AG04450 (cell line): ENCODE measurements at regions of chr14 and their contacts with region 1.

Region 1: GRCh38 chr14:75487155-75487671 is 35.1 kb upstream of the BATF start:
- DNase-seq: no peak
- H3K4me3 ChIP-seq: no peak overlapping the region
- H3K27ac ChIP-seq: no peak overlapping the region
- H3K27me3 ChIP-seq: peaks cover 14% of the 10 kb centered on the region
- CTCF ChIP-seq: no peak

Region 2: DNA sequence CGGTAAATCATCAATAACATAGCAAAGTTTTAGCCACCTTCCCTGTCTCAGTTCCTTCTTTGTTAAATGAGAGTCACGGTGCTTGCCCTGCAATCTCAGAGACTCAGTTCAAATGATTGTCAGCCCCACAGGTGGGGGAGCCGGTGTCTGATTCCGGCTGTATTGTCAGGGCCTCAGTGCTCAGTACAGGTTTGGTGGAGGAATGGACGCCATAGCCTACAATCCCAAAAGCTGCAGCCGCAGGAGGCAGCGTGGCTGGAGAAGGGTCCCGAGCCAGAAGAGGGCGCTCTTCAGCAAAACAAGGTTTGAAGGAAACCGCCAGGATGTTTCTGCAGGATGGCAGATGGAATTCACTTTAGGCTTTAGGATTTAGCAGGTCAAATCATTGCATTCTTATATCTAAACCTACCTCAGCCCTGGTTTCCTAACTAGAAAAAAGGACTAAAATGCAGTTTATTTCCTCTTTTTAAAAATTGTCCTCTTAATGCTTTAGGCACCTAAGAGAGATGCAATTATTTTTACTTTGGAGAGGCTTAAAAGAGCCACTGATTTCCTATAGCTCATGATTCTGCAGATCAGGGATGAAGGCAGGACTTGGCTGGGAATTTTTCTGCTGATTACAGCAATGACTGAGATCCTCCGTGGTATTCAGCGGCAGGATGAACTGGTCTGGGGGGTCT is 179.4 kb before region 1 on chr14:
- CTCF ChIA-PET with region 1: interaction called, 155 read pairs
- POLR2A ChIA-PET with region 1: no interaction called
- DNase-seq: no peak
- H3K4me3 ChIP-seq: no peak overlapping the region
- H3K27ac ChIP-seq: no peak overlapping the region
- H3K27me3 ChIP-seq: no peaks in the 10 kb centered on the region
- CTCF ChIP-seq: peak; percentile 96

Region 3: DNA sequence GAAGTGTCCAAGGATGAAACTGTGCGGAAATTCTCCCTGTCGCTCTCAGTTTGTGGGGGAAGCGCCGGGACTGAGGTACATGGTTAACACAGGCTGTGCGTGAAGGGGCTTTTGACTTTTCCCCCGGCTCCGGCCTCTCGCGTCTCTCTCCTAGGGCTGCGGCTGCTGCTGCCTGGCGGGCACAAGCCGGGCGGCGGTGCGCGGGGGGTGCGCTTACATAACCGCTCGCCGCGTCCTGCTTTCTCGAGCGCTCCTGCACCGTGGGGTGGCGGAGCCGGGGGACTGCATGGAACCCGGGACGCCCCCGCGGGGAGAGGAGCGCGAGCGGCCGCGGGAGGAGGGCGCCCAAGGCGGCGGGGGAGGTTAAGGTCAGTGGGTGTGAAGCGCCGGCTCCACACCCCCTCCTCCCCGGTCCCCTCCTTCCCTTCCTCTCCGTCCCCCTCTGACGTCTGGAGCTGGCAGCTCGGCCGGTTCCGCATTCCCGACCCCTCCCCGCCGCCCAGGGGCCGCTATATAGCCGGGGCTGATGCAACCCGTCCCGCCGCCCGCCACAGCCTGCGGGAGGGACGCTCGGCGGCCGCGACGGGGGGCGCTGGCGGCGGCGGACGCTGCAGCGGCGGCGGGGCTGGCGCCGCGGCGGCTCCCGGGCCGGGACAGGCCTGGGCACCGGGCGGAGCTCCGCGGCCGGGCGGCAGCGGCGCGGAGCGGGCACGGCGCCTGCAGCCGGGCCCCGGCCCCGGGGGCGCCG is 59.6 kb before region 1 on chr14 and contains the start of gene JDP2:
- CTCF ChIA-PET with region 1: interaction called, 14 read pairs
- POLR2A ChIA-PET with region 1: no interaction called
- DNase-seq: peak; percentile 55
- H3K4me3 ChIP-seq: peak within 1 kb of the TSS; percentile 79
- H3K27ac ChIP-seq: peak within 1 kb of the TSS; percentile 21
- H3K27me3 ChIP-seq: no peaks in the 10 kb centered on the region
- CTCF ChIP-seq: peak; percentile 14; the same call in 1 of the 2 replicates
- polyA plus RNA-seq, gene JDP2: 46.5 and 49.1 TPM in 2 replicates

Region 4: GRCh38 chr14:75499084-75499875 is 12.1 kb after region 1 on chr14:
- CTCF ChIA-PET with region 1: interaction called, 12 read pairs
- POLR2A ChIA-PET with region 1: no interaction called
- DNase-seq: no peak
- H3K4me3 ChIP-seq: no peak overlapping the region
- H3K27ac ChIP-seq: no peak overlapping the region
- H3K27me3 ChIP-seq: peaks cover 6% of the 10 kb centered on the region
- CTCF ChIP-seq: no peak

Region 5: DNA sequence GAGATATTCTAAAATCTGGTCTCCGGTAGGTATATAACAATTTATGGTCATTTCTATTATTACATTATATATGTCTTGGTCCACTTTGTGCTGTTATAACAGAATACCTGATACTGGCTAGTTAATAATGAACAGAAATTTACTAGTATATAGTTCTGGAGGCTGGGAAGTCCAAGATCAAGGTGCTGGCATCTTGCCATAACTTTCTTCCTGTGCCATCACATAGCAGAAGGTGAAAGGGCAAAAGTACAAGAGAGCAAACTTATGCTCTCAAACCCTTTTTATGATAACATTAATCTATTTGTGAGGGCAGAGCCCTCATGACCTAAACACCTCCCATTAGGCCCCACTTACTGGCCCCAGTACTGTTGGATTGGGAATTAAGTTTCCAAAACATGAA is 17.2 kb after region 1 on chr14:
- CTCF ChIA-PET with region 1: interaction called, 12 read pairs
- POLR2A ChIA-PET with region 1: no interaction called
- DNase-seq: no peak
- H3K4me3 ChIP-seq: no peak overlapping the region
- H3K27ac ChIP-seq: no peak overlapping the region
- H3K27me3 ChIP-seq: no peaks in the 10 kb centered on the region
- CTCF ChIP-seq: no peak

Region 6: DNA sequence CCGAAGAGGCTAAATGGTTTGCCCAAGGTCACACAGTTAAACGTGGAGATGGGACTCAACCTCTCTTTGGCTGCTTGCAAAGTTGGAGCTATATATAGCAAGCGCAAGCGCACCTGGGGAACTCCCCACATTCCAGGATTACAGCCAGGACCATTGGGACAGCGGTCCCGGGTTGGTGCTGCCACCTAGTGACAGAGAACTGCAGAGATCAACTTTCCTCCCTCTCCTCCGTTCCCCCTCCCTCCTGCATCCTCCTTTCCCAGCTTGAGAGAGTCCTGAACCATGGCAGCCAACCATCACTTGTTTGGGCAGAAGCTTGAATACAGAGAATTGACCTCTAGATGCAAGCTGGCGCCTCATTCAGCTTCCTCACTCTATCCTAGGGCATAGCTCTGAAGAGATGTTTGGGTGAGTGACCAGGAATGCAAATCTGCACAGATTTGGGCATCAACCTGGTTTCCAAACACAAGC is 73.8 kb after region 1 on chr14:
- CTCF ChIA-PET with region 1: interaction called, 16 read pairs
- POLR2A ChIA-PET with region 1: no interaction called
- DNase-seq: no peak
- H3K4me3 ChIP-seq: no peak overlapping the region
- H3K27ac ChIP-seq: no peak overlapping the region
- H3K27me3 ChIP-seq: peaks cover 13% of the 10 kb centered on the region
- CTCF ChIP-seq: peak; percentile 86

Region 7: DNA sequence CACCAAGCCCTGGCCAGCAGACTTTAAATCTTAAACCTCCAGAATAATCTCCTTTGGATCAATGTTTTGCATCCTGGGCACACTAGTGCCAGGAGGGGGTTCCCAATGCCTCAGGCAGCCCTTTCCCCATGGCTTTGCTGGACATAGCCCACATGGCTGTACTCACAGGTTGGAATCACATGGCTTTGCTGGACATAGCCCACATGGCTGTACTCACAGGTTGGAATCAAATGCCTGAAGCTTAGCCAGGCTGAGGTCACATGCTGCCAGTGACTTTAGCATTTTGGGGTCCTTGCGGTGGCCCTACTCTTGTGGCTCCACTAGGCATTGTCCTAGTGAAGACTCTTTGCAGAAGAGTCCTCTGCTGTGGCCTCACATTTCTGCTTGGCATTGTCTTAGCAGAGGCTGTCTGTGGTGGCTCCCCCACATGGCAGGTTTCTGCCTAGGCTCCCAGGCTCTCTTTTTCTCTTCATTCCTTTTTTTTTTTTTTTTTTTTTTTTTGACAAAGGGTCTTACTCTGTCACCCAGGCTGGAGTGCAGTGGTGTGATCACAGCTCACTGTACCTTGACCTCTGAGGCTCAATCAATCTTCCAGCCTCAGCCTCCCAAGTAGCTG is 104.2 kb after region 1 on chr14:
- CTCF ChIA-PET with region 1: no interaction called
- POLR2A ChIA-PET with region 1: no interaction called
- DNase-seq: no peak
- H3K4me3 ChIP-seq: no peak overlapping the region
- H3K27ac ChIP-seq: no peak overlapping the region
- H3K27me3 ChIP-seq: peaks cover 18% of the 10 kb centered on the region
- CTCF ChIP-seq: no peak